H1 (cell line): ENCODE measurements at regions of chr12 and their contacts with region 1.

Region 1: DNA sequence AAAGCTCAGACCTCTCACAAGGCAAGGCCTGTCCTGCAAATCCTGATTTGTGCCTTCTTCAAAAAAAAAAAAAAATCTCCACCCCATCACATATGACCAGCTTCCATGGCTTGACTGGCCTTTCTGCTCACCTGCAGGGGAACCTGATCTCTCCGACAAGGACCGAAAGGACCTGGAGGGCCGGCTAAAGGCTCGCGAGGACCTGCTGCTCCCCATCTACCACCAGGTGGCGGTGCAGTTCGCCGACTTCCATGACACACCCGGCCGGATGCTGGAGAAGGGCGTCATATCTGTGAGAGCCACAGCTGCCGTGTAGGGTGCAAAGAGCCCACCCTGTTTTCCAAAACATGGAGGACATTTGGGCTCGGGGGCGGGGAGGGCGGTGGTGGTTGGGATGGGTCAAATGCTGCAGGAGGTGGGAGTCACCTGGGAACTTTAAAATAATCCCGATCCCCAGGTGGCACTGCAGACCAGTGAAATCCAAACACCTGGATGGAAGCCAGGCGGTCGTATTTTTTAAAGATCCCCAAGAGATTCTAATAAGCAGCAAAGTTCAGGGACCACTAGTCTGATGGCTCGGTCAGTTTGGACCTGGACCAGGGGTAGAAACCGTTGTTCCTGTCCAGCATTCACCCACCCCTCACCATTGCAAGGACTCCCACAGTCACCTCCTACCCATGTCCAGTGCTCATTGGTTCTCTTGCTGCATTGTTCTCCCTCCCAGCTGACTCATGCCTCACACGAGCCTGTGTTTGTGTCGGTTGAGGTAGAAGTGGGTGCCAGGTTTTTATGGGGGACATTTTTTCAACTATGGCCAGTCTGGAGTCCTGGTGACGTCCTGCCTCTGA is 44.8 kb downstream of the FOXN4 start:
- DNase-seq: peak; percentile 76 to 93
- H3K4me3 ChIP-seq: no peak overlapping the region
- H3K27ac ChIP-seq: no peak overlapping the region
- H3K4me1 ChIP-seq: no peaks in the 10 kb centered on the region; a peak in 1 of 7 replicates
- H3K27me3 ChIP-seq: no peaks in the 10 kb centered on the region
- CTCF ChIP-seq: peak; percentile 95 to 96 (median 96)
- EP300 ChIP-seq: no peak
- POLR2A ChIP-seq: no peak
- RAD21 ChIP-seq: peak; percentile 90

Region 2: GRCh38 chr12:109134186-109134917 is 130.0 kb before region 1 on chr12:
- CTCF ChIA-PET with region 1: interaction called, 10 read pairs
- POLR2A ChIA-PET with region 1: no interaction called
- DNase-seq: peak in 1 of 2 experiments; percentile 74
- H3K4me3 ChIP-seq: no peak overlapping the region
- H3K27ac ChIP-seq: no peak overlapping the region
- H3K4me1 ChIP-seq: no peaks in the 10 kb centered on the region
- H3K27me3 ChIP-seq: no peaks in the 10 kb centered on the region
- CTCF ChIP-seq: peak; percentile 74 to 79 (median 75)
- EP300 ChIP-seq: no peak
- POLR2A ChIP-seq: no peak
- RAD21 ChIP-seq: peak; percentile 65 to 71

Region 3: GRCh38 chr12:109154451-109155438 is 109.6 kb before region 1 on chr12:
- CTCF ChIA-PET with region 1: no interaction called
- POLR2A ChIA-PET with region 1: no interaction called
- DNase-seq: peak; percentile 88 to 90
- H3K4me3 ChIP-seq: peak overlapping the region; percentile 71 to 80 (median 76)
- H3K27ac ChIP-seq: peak overlapping the region; percentile 82
- H3K4me1 ChIP-seq: peaks cover 0 to 3% (median 3%) of the 10 kb centered on the region in 4 experiments; a peak in 3 of 7 replicates
- H3K27me3 ChIP-seq: no peaks in the 10 kb centered on the region; a peak in 2 of 7 replicates
- CTCF ChIP-seq: no peak; a peak in 1 of 4 replicates
- EP300 ChIP-seq: no peak; a peak in 1 of 3 replicates
- POLR2A ChIP-seq: peak; percentile 72 to 77
- RAD21 ChIP-seq: peak in 1 of 2 experiments; percentile 4; a peak in 1 of 4 replicates

Region 4: DNA sequence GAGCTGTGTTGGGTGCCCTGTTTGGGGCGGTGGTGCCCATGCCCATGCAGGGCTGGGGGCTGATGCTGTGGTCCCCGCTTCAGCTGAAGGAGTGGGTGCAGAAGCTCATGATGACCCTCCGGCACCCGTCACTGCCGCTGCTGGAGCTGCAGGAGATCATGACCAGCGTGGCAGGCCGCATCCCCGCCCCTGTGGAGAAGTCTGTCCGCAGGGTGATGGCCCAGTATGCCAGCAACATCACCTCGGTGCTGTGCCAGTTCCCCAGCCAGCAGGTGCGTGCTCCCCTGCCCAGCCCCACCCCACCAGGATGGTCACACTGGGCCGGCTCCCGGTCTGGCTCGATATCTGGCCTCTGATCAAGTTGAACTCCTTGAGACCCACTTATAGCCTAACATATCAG is 55.2 kb before region 1 on chr12:
- CTCF ChIA-PET with region 1: no interaction called
- POLR2A ChIA-PET with region 1: no interaction called
- DNase-seq: no peak
- H3K4me3 ChIP-seq: no peak overlapping the region
- H3K27ac ChIP-seq: no peak overlapping the region
- H3K4me1 ChIP-seq: no peaks in the 10 kb centered on the region
- H3K27me3 ChIP-seq: no peaks in the 10 kb centered on the region
- CTCF ChIP-seq: no peak
- EP300 ChIP-seq: no peak
- POLR2A ChIP-seq: no peak
- RAD21 ChIP-seq: no peak

Region 5: DNA sequence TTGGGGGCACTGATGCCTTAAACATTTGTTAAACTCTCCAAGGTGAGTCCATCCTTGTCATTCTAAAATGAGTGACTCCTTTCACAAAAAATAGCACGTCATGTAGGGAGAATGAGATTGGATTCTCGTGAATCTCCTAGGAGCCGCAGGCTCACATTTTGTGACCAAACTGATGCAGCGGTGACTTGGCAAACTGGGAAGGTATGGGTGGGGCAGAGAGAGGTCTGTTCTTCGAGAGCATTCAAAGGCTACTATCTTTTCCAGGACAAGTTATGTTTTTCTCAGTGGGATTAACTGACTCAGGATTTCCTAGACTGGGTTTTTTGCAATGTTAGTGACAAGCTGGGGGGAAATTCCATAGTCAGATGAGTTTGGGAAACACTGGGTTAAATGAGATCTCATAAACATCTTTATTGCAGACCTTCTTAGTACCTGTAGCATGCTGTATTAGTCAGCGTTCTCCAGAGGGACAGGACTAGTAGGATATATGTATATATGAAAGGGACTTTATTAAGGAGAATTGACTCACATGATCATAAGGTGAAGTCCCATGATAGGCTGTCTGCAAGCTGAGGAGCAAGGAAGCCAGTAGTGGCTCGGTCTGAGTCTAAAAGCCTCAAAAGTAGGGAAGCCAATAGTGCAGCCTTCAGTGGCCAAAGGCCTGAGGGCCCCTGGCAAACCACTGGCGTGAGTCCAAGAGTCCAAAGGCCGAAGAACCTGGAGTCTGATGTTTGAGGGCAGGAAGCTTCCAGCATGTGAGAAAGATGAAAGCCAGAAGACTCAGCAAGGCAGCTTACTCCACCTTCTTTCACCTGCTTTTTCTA is 16.3 kb before region 1 on chr12:
- CTCF ChIA-PET with region 1: interaction called, 22 read pairs
- POLR2A ChIA-PET with region 1: no interaction called
- DNase-seq: no peak
- H3K4me3 ChIP-seq: no peak overlapping the region
- H3K27ac ChIP-seq: no peak overlapping the region
- H3K4me1 ChIP-seq: no peaks in the 10 kb centered on the region
- H3K27me3 ChIP-seq: 0 out of 7 replicates have a peak, but pooled peaks cover 0 to 2% (median 0%) of the 10 kb centered on the region in 4 experiments
- CTCF ChIP-seq: no peak
- EP300 ChIP-seq: no peak
- POLR2A ChIP-seq: no peak
- RAD21 ChIP-seq: no peak

Region 6: DNA sequence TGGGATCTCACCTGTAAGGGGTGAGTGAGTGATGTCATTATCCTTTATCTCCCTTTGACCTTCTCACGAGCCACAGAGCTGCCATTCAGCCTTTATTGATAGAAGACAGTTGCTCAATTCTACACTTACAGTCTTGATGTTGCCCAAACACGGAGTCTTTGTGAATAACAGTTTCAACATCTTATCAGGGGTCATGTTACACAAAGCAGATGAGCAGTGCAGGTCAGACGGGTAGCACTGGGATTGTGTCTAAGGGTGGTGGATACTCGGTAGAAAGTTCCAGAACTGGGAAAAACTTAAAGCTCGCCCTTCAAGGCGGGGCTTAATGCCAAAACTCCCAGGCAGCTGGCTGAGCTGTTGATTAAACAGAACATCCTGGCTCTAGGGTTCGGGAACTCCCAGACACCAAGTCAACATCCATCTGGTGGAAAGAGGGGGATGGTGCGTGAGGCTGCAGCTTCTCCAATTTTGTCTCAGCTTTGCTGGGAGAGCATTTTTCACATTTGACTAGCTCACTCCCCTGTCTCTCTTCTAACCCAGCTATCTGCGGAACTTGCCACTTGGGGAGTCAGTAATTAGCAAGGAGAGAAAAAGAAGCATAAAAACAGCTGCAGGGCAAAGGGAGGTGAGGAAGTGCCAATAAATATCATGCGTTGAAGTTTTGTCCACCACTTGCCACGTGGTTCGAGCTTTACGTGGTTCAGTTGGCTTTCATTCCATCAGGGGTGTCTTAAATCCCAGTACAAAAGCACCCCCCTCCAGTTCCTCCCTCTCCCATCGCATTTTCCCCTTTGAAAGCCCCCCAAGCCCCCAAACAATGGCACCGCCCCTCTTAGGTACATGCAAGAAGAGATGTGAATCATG is 13.8 kb after region 1 on chr12:
- CTCF ChIA-PET with region 1: interaction called, 43 read pairs
- POLR2A ChIA-PET with region 1: interaction called, 3 read pairs
- DNase-seq: no peak
- H3K4me3 ChIP-seq: no peak overlapping the region
- H3K27ac ChIP-seq: no peak overlapping the region
- H3K4me1 ChIP-seq: peaks cover 0 to 6% (median 3%) of the 10 kb centered on the region in 4 experiments; a peak in 4 of 7 replicates
- H3K27me3 ChIP-seq: no peaks in the 10 kb centered on the region
- CTCF ChIP-seq: peak in 2 of 3 experiments; percentile 11 to 18; a peak in 1 of 4 replicates
- EP300 ChIP-seq: no peak
- POLR2A ChIP-seq: no peak
- RAD21 ChIP-seq: no peak; a peak in 1 of 4 replicates

Region 7: GRCh38 chr12:109377139-109377685 is 112.9 kb after region 1 on chr12:
- CTCF ChIA-PET with region 1: interaction called, 78 read pairs
- POLR2A ChIA-PET with region 1: interaction called, 3 read pairs
- DNase-seq: no peak
- H3K4me3 ChIP-seq: no peak overlapping the region
- H3K27ac ChIP-seq: no peak overlapping the region
- H3K4me1 ChIP-seq: no peaks in the 10 kb centered on the region; a peak in 1 of 7 replicates
- H3K27me3 ChIP-seq: no peaks in the 10 kb centered on the region
- CTCF ChIP-seq: no peak
- EP300 ChIP-seq: no peak
- POLR2A ChIP-seq: no peak
- RAD21 ChIP-seq: no peak

Region 8: DNA sequence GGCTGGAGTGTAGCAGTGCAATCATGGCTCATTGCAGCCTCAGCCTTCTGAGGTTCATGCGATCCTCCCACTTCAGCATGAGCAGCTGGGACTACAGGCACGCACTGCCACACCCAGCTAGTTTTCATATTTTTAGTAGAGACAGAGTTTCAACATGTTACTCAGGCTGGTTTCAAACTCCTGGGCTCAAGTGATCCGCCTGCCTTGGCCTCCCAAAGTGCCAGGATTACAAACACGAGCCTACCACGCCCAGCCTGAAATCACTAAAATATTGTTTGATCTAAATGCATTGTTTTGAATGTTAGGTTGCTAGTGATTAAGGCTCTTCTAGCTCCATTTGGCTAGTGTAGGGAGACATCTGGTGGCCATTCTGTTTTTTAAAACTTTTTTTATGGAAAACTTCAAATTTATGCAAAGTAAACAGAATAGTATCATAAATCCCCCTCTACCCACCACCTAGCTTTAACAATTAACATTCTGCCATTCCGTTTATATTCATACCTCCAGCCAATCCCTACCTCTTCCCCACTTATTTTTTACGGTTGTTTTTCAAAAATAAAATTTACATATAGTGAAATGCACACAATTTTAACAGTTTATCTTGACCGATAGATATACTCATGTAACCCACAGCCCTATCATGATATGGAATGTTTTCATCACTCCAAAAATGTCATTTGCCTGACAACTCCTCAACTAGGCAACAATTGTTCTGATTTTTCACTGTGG is 121.2 kb after region 1 on chr12:
- CTCF ChIA-PET with region 1: interaction called, 148 read pairs
- POLR2A ChIA-PET with region 1: interaction called, 5 read pairs
- DNase-seq: no peak
- H3K4me3 ChIP-seq: no peak overlapping the region
- H3K27ac ChIP-seq: no peak overlapping the region
- H3K4me1 ChIP-seq: peaks cover 0 to 2% (median 0%) of the 10 kb centered on the region in 4 experiments; a peak in 1 of 7 replicates
- H3K27me3 ChIP-seq: no peaks in the 10 kb centered on the region
- CTCF ChIP-seq: peak in 2 of 3 experiments; percentile 30 to 59; a peak in 2 of 4 replicates
- EP300 ChIP-seq: no peak
- POLR2A ChIP-seq: no peak
- RAD21 ChIP-seq: peak; percentile 85 to 90

Region 9: DNA sequence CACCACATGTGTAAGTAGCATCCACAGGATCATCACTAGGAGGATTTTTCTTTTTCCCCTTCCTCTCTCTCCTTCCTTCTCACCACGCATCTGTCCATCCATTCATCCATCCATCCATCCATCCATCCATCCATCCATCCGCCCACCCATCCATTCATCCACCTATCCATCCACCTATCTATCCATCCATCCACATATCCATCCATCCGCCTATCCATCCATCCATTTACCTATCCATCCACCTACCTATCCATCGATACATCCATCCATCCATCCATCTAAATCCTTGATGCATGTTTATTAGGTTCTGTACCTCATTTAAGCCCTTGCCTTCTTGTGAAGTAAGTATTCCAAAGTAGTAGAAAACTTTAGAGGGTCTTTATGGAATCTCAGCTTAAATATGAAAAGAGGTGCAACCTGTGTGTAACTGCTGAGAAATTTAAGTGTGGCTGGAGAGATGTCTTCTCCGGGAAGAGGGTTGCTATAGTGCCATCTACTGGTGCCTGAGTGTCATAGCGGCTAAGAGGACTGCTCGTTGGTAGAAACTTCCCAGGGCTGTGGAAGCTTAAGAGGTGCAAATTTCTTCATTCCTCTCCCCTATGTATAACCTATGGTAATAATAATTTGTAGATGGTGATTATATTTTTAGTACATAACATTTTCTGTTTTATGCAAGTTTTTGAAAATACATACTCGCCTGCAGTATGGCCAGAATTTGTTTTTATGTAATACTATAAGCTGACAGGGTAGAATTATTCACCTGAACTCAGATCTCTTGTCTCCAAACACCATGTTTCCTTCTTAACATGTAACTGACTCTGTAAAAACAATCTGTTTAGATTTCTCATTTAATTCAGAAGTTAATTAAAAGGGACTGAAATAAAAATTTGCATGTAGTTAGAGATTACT is 129.4 kb after region 1 on chr12:
- CTCF ChIA-PET with region 1: interaction called, 148 read pairs
- POLR2A ChIA-PET with region 1: no interaction called
- DNase-seq: no peak
- H3K4me3 ChIP-seq: no peak overlapping the region
- H3K27ac ChIP-seq: no peak overlapping the region
- H3K4me1 ChIP-seq: no peaks in the 10 kb centered on the region
- H3K27me3 ChIP-seq: no peaks in the 10 kb centered on the region
- CTCF ChIP-seq: peak; percentile 64 to 90 (median 73)
- EP300 ChIP-seq: no peak
- POLR2A ChIP-seq: no peak
- RAD21 ChIP-seq: peak; percentile 64 to 76